HEK293 (cell line): ENCODE measurements at regions of chr3 and their contacts with region 1.

Region 1: GRCh38 chr3:134600685-134601463 is 49.9 kb downstream of the KY start:
- H3K4me3 ChIP-seq: no peak overlapping the region
- H3K27ac ChIP-seq: no peak overlapping the region
- H3K4me1 ChIP-seq: no peaks in the 10 kb centered on the region
- CTCF ChIP-seq: no peak

Region 2: GRCh38 chr3:134590766-134591165 is 10.1 kb before region 1 on chr3:
- CTCF ChIA-PET with region 1: interaction called, 13 read pairs
- POLR2A ChIA-PET with region 1: no interaction called
- H3K4me3 ChIP-seq: no peak overlapping the region
- H3K27ac ChIP-seq: no peak overlapping the region
- H3K4me1 ChIP-seq: no peaks in the 10 kb centered on the region
- CTCF ChIP-seq: no peak

Region 3: GRCh38 chr3:134754768-134755559 is 154.1 kb after region 1 on chr3:
- CTCF ChIA-PET with region 1: interaction called, 17 read pairs
- POLR2A ChIA-PET with region 1: interaction called, 3 read pairs
- H3K4me3 ChIP-seq: no peak overlapping the region
- H3K27ac ChIP-seq: no peak overlapping the region
- H3K4me1 ChIP-seq: no peaks in the 10 kb centered on the region
- CTCF ChIP-seq: no peak; the same call in 1 of the 2 replicates